HAP-1 (cell line): ENCODE measurements at regions of chr11 and their contacts with region 1.

Region 1: DNA sequence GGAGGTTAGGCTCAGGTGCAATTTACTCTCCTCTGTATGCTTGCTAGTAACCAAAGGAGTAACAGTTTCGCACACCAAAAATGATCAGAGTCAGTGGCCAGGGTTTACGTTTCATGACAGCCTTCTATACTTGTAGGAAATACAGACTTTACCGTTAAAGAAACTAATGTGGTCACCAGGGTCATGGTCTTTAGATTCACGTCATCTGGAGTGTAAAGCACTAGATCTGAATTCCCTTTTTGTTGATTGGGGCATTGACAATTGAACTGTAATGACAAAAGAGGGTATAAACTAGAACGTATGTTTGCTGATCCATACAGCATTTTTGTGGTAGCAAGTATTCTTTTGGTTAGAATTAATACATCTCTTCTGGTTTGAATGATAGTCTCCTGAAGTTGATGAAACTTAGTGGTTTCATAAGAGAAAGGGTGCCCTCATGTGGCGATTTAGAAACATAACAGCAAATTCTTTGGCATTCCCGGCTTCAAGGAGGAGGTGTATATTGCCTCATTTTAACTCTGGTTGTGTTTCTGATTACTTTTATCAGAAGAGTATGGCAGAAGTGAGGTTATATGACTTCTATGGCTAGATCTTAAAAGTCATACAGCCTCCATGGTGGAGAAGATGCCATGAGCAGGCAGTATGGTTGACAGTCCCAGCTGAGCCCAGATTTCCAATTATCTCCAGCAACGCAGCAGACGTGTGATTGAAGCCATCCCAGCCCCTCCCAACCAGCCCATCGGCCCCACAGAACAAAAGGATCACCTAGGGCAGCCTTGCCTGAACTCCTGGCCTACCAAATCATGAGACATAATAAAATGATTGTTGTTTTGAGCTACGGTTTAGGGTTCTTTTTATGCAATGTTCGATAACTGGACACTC is 35.1 kb downstream of the MMP7 start:
- DNase-seq: peak; percentile 58 to 81
- H3K4me3 ChIP-seq: no peak overlapping the region
- H3K4me1 ChIP-seq: no peaks in the 10 kb centered on the region
- H3K27me3 ChIP-seq: peaks cover 13% of the 10 kb centered on the region

Region 2: DNA sequence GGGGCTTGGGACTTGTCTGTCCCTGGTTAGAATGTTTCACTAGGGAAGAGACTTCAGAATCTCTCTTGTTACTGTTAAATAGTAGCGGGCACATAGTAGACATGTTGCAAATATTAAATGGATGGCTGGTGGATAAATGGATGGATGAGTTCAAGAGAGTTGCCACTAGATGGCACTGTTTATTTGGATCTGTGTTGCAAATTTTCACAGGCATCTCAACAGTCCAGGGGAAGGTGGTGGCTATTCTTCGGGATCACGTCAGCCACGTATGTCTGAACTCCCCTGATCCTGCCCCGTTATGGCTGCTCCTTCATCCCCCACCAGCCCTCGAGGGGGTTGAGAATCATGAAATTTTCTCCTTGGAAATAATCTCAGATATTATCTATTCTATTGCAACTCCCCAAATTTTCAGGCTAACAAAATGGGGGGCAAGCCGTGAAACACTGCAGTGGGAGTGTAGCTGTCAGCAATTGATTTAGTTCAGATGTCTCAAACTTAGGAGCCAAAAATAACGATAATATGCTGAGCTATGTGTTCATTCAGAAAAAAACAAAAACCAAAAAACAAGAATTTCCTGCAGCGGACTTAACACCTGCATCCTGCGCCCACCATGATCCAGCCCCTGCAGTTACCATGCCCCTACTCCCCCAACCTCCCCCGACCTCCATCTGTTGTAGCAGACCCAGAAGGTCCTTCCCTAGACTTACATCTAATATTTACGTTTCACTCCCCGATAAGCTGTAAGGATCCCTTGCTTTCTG is 207.3 kb before region 1 on chr11:
- in situ Hi-C with region 1: loop called (anchors 10 kb)
- DNase-seq: peak; percentile 70 to 87
- H3K4me3 ChIP-seq: no peak overlapping the region
- H3K4me1 ChIP-seq: peaks cover 19% of the 10 kb centered on the region
- H3K27me3 ChIP-seq: no peaks in the 10 kb centered on the region

Region 3: DNA sequence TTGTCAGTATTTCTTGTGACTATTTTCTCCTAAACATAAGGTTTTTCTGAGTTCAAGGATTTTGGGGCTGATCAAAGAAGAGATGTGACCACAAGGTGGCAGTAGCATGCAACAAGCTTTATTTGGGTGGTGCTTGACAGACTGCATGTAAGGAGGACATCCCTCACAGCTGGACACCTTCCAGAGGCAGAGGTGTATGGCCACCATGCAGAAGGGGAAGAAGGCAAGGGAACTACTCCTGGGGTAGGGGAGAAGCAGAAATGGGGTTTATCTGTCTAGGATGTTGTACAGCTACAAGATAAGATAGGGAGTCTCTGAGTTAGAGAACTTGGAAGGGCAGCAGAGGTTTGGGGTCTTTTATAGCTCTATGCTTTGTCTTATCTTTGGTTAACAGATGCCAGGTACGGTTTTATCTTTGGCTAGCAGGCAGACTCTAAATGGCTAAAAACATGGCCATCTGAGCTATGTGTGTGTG is 153.5 kb before region 1 on chr11:
- in situ Hi-C with region 1: loop called (anchors 5 kb)
- DNase-seq: peak; percentile 69 to 84
- H3K4me3 ChIP-seq: no peak overlapping the region
- H3K4me1 ChIP-seq: no peaks in the 10 kb centered on the region; the same call in 1 of the 2 replicates
- H3K27me3 ChIP-seq: peaks cover 9% of the 10 kb centered on the region